OCI-LY7 (cell line): ENCODE measurements at regions of chr16 and their contacts with region 1.

Region 1: DNA sequence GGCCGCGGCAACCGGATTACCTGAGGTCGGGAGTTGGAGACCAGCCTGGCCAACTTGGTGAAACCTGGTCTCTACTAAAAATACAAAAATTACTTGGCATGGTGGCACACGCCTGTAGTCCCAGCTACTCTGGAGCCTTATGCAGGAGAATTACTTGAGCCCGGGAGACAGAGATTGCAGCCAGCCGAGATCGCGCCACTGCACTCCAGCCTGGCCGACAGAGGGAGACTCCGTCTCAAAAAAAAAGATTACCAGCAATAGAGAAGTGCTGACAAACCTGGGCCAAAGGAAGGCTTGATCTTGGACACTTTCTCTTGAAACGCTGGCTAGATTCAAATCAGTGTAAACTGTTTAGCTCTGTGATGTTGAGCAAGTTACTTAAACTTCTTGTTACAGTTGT is 4.3 kb downstream of the MT1H start:
- DNase-seq: peak; percentile 19
- H3K4me3 ChIP-seq: no peak overlapping the region
- H3K27ac ChIP-seq: no peak overlapping the region
- H3K4me1 ChIP-seq: no peaks in the 10 kb centered on the region
- CTCF ChIP-seq: peak; percentile 52; the same call in 1 of the 2 replicates

Region 2: DNA sequence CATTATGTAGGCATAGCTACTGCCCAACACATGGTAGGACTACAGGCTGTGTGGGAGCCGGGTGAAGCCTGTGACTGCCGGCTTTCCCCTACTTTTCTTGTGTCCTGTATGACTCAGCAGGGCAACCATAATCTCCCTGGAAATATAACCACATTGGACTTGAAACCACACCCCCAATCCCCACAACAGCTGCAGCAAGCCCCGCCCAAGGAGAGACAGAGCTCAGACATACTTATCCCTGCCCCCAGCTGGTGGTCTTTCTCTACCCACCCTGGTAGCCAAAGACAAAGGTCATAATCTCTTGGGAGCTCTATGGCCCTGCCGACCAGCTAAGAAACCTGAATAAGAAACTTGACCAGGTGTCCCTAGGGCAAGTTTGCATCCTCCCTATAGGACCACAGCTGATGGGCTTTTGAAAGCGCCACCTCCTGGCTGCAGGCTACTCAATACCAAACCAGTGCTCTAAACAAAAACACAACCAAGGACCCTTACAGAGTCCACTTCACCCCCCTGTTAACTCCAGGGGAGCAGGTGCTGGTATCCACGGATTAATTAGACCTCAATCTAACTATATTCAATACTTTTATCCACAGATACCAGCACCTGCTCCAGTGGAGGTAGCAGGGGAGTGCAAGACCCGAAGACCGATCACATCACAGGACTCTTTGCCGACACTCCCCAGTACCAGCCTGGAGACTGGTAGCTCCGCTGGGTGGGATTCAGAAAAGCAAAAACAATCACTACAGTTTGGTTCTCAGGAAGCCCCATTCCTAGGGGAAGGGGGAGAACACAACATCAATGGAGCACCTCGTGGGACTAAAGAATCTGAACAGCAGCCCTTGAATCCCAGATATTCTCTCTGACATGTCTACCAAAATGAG is 1652.1 kb before region 1 on chr16:
- CTCF ChIA-PET with region 1: no interaction called
- POLR2A ChIA-PET with region 1: no interaction called
- intact Hi-C with region 1: no loop called
- DNase-seq: no peak
- H3K4me3 ChIP-seq: no peak overlapping the region
- H3K27ac ChIP-seq: no peak overlapping the region
- H3K4me1 ChIP-seq: no peaks in the 10 kb centered on the region
- CTCF ChIP-seq: peak; percentile 57; the same call in 1 of the 2 replicates

Region 3: DNA sequence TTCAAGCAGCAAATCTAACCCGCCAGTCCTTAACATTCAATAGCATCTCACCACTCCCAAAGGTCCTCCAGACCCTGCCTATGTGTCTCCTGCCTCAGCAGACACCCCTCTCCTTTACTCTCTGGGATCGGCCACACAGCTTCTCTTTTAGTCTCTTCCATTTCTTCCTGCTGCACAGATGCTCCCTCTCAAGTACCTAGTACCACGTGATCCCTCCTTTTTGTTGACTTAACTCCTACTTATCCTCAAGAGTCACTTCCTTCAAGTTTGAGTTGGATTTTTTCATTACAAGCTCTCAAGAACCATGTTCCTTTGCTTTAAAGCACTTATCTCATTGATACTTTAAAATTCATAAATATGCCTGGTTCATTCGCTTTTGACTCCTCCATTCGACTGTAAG is 273.5 kb before region 1 on chr16:
- CTCF ChIA-PET with region 1: no interaction called
- POLR2A ChIA-PET with region 1: interaction called, 13 read pairs
- intact Hi-C with region 1: no loop called
- DNase-seq: no peak
- H3K4me3 ChIP-seq: no peak overlapping the region
- H3K27ac ChIP-seq: no peak overlapping the region
- H3K4me1 ChIP-seq: no peaks in the 10 kb centered on the region
- CTCF ChIP-seq: no peak